Activated CD4-positive, alpha-beta memory T cell treated with anti-CD3 and anti-CD28 coated beads, Interleukin-2, amount 10 ng/mL, durations not matched to agents 7 days and 5 days (primary cell): ENCODE measurements at regions of chr5 and their contacts with region 1.

Region 1: DNA sequence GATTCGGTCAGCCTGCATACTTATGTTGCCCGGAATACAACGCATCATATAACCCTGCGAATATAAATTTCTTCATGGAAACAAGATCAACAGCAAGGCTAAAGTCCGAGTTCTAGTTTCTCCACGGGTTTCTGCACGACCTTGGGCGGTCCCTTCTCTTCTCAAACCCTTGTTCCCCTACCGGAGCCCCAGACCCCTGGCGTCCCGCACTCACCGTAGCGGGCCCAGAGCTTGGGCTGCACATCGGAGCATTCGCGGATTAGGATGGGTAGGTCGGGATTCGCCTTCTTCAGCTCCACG is 438 bp downstream of the NDUFA2 start:
- DNase-seq: no peak
- H3K4me3 Mint-ChIP-seq: peak overlapping the region; percentile 98
- H3K27ac Mint-ChIP-seq: peak overlapping the region; percentile 96
- H3K4me1 Mint-ChIP-seq: peaks cover 48% of the 10 kb centered on the region
- H3K27me3 Mint-ChIP-seq: no peaks in the 10 kb centered on the region

Region 2: GRCh38 chr5:140372971-140373487 is 274.0 kb before region 1 on chr5:
- CTCF ChIA-PET with region 1: interaction called, 11 read pairs
- POLR2A ChIA-PET with region 1: no interaction called
- DNase-seq: peak; percentile 43
- H3K4me3 Mint-ChIP-seq: no peak overlapping the region
- H3K27ac Mint-ChIP-seq: no peak overlapping the region
- H3K4me1 Mint-ChIP-seq: peaks cover 3% of the 10 kb centered on the region
- H3K27me3 Mint-ChIP-seq: no peaks in the 10 kb centered on the region

Region 3: GRCh38 chr5:140547508-140548299 is 99.3 kb before region 1 on chr5 and contains the start of gene EIF4EBP3:
- CTCF ChIA-PET with region 1: interaction called, 13 read pairs
- POLR2A ChIA-PET with region 1: interaction called, 11 read pairs
- DNase-seq: peak; percentile 89
- H3K4me3 Mint-ChIP-seq: peak within 1 kb of the TSS; percentile 66
- H3K27ac Mint-ChIP-seq: peak within 1 kb of the TSS; percentile 83
- H3K4me1 Mint-ChIP-seq: peaks cover 56% of the 10 kb centered on the region
- H3K27me3 Mint-ChIP-seq: no peaks in the 10 kb centered on the region
- total RNA-seq, gene EIF4EBP3: 8.0 to 11.6 TPM

Region 4: DNA sequence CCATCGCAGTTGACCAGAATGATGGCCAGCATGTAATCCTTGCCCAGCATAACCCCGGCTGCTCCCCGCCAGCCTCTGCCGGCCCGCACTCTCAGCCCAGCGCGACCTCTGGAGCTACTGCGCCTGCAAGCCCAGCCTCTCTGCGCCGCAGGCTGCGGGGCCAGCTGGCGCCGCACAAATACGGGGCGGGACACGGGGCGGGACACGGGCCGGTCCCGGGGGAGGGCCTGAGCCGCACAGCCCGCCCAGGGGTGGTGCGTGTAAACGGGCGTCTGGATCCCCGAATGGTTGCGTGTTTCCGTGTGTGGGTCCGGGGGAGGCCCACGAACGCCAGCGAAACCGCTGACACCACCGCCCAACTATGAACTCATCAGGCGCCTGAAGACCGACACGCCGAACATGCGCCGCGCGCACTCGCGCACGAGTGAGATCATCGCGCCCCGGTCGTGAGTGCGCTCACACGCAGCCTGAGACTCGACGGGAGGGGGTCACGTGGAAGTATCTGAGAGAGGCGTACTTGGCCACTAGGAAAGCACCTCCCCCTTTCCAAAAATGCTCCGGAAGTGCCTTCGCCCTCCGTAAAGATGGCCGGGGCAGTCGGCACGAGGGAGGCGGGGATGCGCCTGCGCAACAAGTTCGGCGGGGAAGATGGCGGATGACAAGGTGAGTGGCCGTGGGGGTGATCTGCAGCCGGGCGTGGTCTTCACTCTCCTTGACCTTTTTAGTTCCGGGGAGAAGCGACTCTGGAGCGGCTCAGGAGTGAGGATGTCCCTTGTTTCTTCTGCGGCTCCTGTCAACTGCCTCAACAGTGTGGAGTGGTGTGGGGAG is 82.6 kb before region 1 on chr5 and contains the starts of genes APBB3 and SLC35A4:
- CTCF ChIA-PET with region 1: no interaction called
- POLR2A ChIA-PET with region 1: interaction called, 19 read pairs
- DNase-seq: peak; percentile 98
- H3K4me3 Mint-ChIP-seq: peak within 1 kb of the TSS; percentile 93
- H3K27ac Mint-ChIP-seq: peak within 1 kb of the TSS; percentile 89
- H3K4me1 Mint-ChIP-seq: peaks cover 67% of the 10 kb centered on the region
- H3K27me3 Mint-ChIP-seq: no peaks in the 10 kb centered on the region
- total RNA-seq, gene APBB3: 23.7 to 27.5 TPM
- total RNA-seq, gene SLC35A4: 78.9 to 82.1 TPM

Region 5: GRCh38 chr5:140664359-140665119 is 17.5 kb after region 1 on chr5 and contains the start of gene WDR55:
- CTCF ChIA-PET with region 1: interaction called, 8 read pairs
- POLR2A ChIA-PET with region 1: interaction called, 47 read pairs
- DNase-seq: peak; percentile 96
- H3K4me3 Mint-ChIP-seq: peak within 1 kb of the TSS; percentile 83
- H3K27ac Mint-ChIP-seq: peak within 1 kb of the TSS; percentile 91
- H3K4me1 Mint-ChIP-seq: peaks cover 37% of the 10 kb centered on the region
- H3K27me3 Mint-ChIP-seq: no peaks in the 10 kb centered on the region
- total RNA-seq, gene WDR55: 35.0 to 35.2 TPM

Region 6: DNA sequence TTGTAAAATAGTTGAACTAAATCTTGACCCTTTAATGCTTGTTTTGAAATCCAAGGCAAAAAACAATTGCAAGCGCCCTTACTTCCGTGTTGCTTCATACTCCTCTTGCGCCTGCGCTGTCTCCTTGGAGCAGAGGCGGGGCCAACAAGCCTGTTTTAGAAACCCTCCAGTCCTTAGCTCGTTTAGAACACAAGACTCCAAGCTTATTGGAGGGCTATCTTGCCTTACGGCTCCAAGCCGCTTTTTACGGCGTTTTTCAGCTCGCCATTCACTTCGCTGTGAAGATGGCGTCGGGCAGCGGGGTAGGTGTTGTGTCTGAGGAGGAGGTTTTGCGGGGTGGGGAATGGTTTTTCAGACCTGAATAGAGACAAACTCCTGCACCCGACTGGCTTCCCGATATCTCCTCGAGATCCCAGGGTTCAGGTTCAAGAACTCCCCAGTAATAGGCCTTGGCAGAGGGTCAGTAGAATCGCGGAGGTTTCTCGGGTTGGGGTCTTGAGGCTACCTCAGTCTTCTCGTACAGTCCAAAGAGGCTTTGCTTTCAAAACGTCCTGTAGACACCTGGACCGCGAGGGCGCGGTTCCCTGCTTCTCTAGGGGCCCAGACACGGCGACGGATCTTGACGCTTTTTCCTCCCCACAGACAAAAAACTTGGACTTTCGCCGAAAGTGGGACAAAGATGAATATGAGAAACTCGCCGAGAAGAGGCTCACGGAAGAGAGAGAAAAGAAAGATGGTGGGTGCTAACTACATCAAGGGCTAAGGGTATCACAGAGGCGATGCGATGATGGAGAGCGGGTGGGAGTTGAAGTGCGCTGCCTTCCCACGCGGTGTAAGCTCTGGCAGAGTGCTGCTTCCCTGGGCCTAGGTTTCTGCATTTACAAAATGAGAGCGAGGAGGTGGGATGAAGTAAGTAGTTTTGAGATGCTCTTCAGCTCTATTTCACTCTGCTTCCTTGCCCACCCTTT is 53.5 kb after region 1 on chr5 and contains the start of gene ZMAT2:
- CTCF ChIA-PET with region 1: interaction called, 5 read pairs
- POLR2A ChIA-PET with region 1: interaction called, 11 read pairs
- DNase-seq: peak; percentile 96
- H3K4me3 Mint-ChIP-seq: peak within 1 kb of the TSS; percentile 99
- H3K27ac Mint-ChIP-seq: peak within 1 kb of the TSS; percentile 85
- H3K4me1 Mint-ChIP-seq: peaks cover 28% of the 10 kb centered on the region
- H3K27me3 Mint-ChIP-seq: no peaks in the 10 kb centered on the region
- total RNA-seq, gene ZMAT2: 52.0 to 52.7 TPM

Region 7: GRCh38 chr5:141618804-141619554 is 972.0 kb after region 1 on chr5 and contains the start of gene DIAPH1:
- CTCF ChIA-PET with region 1: no interaction called
- POLR2A ChIA-PET with region 1: no interaction called
- DNase-seq: peak; percentile 98
- H3K4me3 Mint-ChIP-seq: peak within 1 kb of the TSS; percentile 100
- H3K27ac Mint-ChIP-seq: peak within 1 kb of the TSS; percentile 92
- H3K4me1 Mint-ChIP-seq: peaks cover 53% of the 10 kb centered on the region
- H3K27me3 Mint-ChIP-seq: no peaks in the 10 kb centered on the region
- total RNA-seq, gene DIAPH1: 317 to 323 TPM